Left cardiac atrium (tissue), 4 donors: ENCODE measurements at regions of chr6 and their contacts with region 1.

Region 1: GRCh38 chr6:12967686-12968085 is 251.1 kb downstream of the PHACTR1 start:
- DNase-seq: no peak
- ATAC-seq: no peak

Region 2: GRCh38 chr6:13006578-13007300 is 39.1 kb after region 1 on chr6:
- intact Hi-C with region 1: loop called in 1 of 2 experiments (anchors 5 kb)
- DNase-seq: no peak
- ATAC-seq: peak in 1 of 2 donors; percentile 89

Region 3: DNA sequence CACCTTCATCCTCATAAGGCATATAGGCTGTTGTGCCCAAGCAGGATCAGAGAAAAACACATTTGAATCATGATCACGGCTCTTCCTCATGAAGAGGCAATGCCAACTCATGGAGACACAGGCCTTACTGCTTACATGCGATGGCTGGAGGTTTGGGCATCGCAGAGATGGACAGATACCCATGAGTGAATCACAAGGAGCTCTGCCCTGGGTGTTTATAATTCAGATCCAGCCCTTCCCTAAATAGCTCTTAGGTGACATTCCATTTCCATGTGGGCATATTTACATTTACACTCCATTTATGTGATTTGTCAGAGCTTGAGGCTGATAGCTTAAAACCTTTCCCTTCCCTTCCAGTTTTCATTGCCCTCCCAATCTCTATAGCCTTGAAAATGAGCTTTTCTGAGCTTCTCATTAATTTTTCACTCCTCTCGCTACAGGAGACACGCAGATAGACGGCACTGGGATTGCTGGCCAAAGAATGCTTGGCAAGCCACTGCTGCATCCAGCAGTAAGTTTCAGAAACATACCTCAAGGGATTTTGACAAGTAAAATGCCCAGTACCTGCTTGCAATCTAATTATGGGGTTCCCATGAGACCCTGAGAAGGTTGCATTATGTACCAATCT is 111.5 kb after region 1 on chr6:
- intact Hi-C with region 1: no loop called
- DNase-seq: no peak
- ATAC-seq: peak in 1 of 2 donors; percentile 69